ENCODE measurements at regions of chr11 and their contacts with region 1.

Region 1: DNA sequence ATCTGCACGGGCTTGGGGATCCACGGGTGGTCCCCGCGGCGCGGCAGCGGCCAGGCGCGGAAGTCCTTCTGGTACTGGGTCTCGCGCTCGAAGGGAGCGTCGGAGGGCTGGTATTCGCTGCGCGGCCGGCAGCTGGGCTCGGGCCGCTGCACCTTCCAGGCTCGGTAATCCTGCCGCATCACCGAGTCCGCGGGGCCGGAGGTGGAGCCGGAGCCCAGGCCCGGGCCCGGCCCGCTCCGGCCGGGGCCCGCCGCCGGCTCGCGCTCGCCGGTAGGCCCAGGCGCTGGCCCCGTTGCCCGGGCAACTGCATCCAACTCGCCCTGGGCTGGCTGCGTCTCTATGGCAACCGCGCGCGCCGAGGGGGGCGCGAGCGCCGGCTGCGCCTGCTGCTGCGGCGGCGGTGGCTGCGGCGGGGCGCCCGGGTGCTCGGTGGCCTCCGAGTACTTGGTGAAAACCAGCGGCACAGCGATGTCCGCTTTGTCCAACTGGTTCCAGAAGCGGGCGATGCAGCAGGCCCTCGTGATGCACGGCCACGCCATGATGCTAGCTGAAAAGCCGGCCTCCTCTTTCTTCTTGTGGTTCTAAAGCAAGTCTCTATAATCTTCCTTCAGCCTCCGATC is 897 bp downstream of the MAP6 start:
- DNase-seq: no peak
- H3K4me3 ChIP-seq: peak overlapping the region; percentile 60 to 72 (median 70)
- H3K27ac ChIP-seq: peak overlapping the region; percentile 71 to 84 (median 78)
- H3K4me1 ChIP-seq: peaks cover 13 to 30% (median 25%) of the 10 kb centered on the region in 4 donors
- H3K27me3 ChIP-seq: peaks cover 0 to 19% (median 0%) of the 10 kb centered on the region in 4 donors
- CTCF ChIP-seq: no peak
- EP300 ChIP-seq: no peak
- POLR2A ChIP-seq: no peak

Region 2: GRCh38 chr11:75583718-75584658 is 84.0 kb before region 1 on chr11:
- intact Hi-C with region 1: loop called (anchors 2 kb)
- DNase-seq: no peak
- H3K4me3 ChIP-seq: peak overlapping the region; percentile 69 to 84 (median 80)
- H3K27ac ChIP-seq: peak overlapping the region; percentile 92 to 98 (median 98)
- H3K4me1 ChIP-seq: peaks cover 19 to 33% (median 26%) of the 10 kb centered on the region in 4 donors
- H3K27me3 ChIP-seq: no peaks in the 10 kb centered on the region
- CTCF ChIP-seq: peak in 1 of 3 experiments; percentile 6
- EP300 ChIP-seq: no peak
- POLR2A ChIP-seq: no peak

Measured in esophagus muscularis mucosa (tissue), 4 donors.